CD8-positive, alpha-beta T cell (primary cell): ENCODE measurements at regions of chr6 and their contacts with region 1.

Region 1: DNA sequence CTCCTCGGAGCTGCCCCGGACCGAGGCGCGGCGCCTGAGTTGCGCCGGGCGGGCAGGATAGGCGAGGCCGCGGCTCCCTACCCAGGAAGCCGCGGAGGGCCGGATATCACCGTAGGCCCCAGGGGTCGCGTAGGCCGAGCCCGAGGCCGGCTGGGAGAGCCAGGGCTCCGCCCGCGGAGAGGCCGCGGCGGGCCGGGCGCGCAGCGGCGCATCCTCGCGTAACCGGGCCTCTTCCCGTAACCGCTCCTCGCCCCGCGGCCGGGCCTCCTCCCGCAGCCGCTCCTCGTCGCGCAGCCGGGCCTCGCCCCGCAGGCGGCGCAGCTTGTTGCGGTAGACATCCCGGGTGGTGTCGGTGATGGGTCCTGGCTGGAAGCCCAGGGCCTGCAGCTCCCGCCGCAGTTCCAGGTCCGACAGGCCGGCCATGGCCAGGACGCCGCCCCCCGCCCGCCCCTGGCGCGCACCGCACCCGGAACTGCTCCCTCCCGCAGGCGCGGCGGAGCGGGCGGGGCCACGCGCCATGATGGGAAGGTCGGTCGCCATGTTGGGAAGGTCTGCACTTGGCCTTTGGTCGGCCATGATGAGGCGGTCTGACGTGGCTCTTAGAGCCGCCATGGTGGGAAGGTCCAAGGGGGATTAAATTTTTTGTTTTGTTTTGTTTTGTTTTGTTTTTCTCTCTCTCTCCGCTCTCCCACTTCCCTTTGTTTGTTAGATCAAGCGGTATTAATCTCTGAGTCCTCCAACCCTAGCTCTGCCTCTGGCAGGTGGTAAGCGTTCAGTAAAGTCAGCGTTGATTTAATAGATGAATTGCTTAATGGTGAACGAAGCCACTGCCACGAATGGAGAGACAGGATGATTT is at the start of gene LEMD2:
- DNase-seq: peak; percentile 88 to 95 (median 93)
- ATAC-seq: peak; percentile 91
- H3K4me3 ChIP-seq: peak within 1 kb of the TSS; percentile 55 to 90
- H3K4me3 Mint-ChIP-seq: peak within 1 kb of the TSS; percentile 97
- H3K27ac ChIP-seq: peak within 1 kb of the TSS; percentile 87 to 90
- H3K27ac Mint-ChIP-seq: peak within 1 kb of the TSS; percentile 99
- H3K4me1 ChIP-seq: peaks cover 41% of the 10 kb centered on the region
- H3K4me1 Mint-ChIP-seq: peaks cover 51% of the 10 kb centered on the region
- H3K27me3 ChIP-seq: no peaks in the 10 kb centered on the region
- H3K27me3 Mint-ChIP-seq: peaks cover 5% of the 10 kb centered on the region
- CTCF ChIP-seq: no peak
- total RNA-seq, gene LEMD2: 124 TPM

Region 2: DNA sequence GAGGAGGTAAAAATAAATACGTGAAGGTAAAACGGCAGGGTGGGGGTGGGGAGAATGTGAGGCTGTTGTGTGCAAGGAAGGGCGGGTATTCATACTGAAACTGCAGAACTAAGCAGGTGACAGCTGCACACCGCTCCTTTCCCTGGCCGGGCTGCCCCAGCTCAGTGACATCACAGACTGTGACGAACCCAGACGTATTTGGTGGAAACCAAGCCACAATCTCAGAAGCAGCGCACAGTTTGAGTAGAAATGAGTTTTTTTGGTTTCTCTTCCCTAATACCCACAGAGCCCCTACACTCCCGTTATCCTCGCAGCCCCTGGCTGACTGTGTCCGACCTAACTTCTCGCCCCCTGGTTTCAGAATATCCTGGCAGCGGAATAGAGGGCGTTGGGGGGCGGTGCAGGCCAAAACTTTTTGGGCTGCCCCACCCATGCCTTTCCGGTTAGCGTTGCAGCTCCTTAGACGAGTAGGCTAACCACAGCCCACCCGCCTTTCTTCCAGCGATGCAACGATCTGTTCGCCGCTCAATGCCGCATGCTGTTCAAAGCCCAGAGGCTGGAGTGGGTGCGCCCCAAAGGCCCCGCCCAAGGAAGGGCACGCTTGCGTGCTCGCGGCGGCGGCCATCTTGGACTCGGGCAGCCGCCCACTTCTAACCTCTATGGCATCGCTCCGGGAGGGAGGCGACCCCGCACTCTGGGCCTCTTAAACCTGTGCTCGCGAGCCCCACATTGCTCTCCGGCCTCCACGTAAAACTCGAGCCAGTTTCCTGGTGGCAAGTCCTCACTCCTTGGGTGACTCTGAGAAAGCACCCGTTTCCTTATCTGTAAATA is 217.9 kb before region 1 on chr6:
- CTCF ChIA-PET with region 1: no interaction called
- POLR2A ChIA-PET with region 1: no interaction called
- intact Hi-C with region 1: loop called in 1 of 2 experiments (anchors 2 kb)
- DNase-seq: peak; percentile 86 to 98 (median 92)
- ATAC-seq: peak; percentile 86
- H3K4me3 ChIP-seq: peak overlapping the region; percentile 57 to 67
- H3K4me3 Mint-ChIP-seq: peak overlapping the region; percentile 92
- H3K27ac ChIP-seq: peak overlapping the region; percentile 93 to 99
- H3K27ac Mint-ChIP-seq: peak overlapping the region; percentile 100
- H3K4me1 ChIP-seq: peaks cover 20% of the 10 kb centered on the region
- H3K4me1 Mint-ChIP-seq: peaks cover 29% of the 10 kb centered on the region
- H3K27me3 ChIP-seq: no peaks in the 10 kb centered on the region
- H3K27me3 Mint-ChIP-seq: no peaks in the 10 kb centered on the region
- CTCF ChIP-seq: no peak

Region 3: GRCh38 chr6:33771146-33772081 is 17.5 kb before region 1 on chr6:
- CTCF ChIA-PET with region 1: interaction called, 14 read pairs
- POLR2A ChIA-PET with region 1: interaction called, 5 read pairs
- intact Hi-C with region 1: no loop called
- DNase-seq: peak; percentile 27 to 81 (median 65)
- ATAC-seq: peak; percentile 82
- H3K4me3 ChIP-seq: no peak overlapping the region
- H3K4me3 Mint-ChIP-seq: no peak overlapping the region
- H3K27ac ChIP-seq: no peak overlapping the region
- H3K27ac Mint-ChIP-seq: peak overlapping the region; percentile 58
- H3K4me1 ChIP-seq: no peaks in the 10 kb centered on the region
- H3K4me1 Mint-ChIP-seq: peaks cover 9% of the 10 kb centered on the region
- H3K27me3 ChIP-seq: no peaks in the 10 kb centered on the region
- H3K27me3 Mint-ChIP-seq: peaks cover 9% of the 10 kb centered on the region
- CTCF ChIP-seq: peak; percentile 95

Region 4: DNA sequence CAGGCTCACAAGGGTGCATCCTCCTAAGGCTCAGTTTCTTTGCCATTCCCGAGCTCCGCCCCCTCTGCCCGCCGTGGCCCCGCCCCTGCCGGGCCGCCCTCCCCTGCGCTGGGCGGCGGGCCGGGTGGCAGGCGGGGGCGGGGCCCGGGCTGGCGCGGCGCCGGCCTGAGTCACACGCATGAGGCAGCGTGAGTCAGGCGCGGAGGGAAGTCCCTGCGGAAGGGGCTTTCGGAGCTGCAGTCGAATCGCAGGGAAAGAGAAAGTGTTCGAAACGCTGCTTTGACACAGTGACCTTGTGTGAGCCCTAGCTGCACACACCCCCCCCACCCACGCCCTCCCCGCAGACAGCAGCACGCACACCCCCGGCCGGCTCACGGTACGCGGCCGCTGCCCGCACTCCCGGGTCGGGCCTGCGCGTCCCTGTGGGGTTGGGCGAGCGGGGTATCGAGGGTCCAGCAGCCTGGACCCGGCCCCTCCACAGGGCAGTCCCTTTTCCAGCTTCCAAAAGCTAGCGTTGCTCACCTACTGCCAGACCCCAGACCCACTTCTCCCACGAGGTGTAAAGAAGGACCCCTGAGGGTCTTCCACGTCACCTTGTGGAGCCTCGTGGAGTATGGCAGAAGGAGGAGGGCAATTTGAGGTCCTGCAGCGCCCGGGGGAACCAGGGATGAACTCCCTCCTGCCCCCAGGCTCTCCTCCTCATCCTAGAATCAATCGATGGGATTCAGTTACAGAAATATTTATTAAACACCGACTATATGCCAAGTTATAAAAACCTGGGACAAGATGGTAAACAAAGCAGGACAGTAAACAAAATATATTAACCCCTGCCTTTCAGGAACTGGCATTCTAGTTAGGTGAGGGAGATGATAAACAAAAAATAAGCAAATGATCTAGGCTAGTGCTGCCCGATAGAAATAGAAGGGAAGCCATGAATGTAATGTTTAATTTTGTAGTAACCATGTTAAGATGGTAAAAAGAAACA is 435.3 kb after region 1 on chr6:
- CTCF ChIA-PET with region 1: no interaction called
- POLR2A ChIA-PET with region 1: no interaction called
- intact Hi-C with region 1: loop called in 1 of 2 experiments (anchors 5 kb)
- DNase-seq: peak; percentile 88 to 99 (median 94)
- ATAC-seq: peak; percentile 98
- H3K4me3 ChIP-seq: peak overlapping the region; percentile 51 to 86
- H3K4me3 Mint-ChIP-seq: peak overlapping the region; percentile 70
- H3K27ac ChIP-seq: peak overlapping the region; percentile 76 to 87
- H3K27ac Mint-ChIP-seq: peak overlapping the region; percentile 89
- H3K4me1 ChIP-seq: peaks cover 14% of the 10 kb centered on the region
- H3K4me1 Mint-ChIP-seq: peaks cover 20% of the 10 kb centered on the region
- H3K27me3 ChIP-seq: no peaks in the 10 kb centered on the region
- H3K27me3 Mint-ChIP-seq: no peaks in the 10 kb centered on the region
- CTCF ChIP-seq: no peak

Region 5: GRCh38 chr6:34425498-34426410 is 636.8 kb after region 1 on chr6 and contains the start of gene RPS10:
- CTCF ChIA-PET with region 1: no interaction called
- POLR2A ChIA-PET with region 1: no interaction called
- intact Hi-C with region 1: loop called in 1 of 2 experiments (anchors 1 kb)
- DNase-seq: peak; percentile 79 to 95 (median 89)
- ATAC-seq: peak; percentile 98
- H3K4me3 ChIP-seq: peak within 1 kb of the TSS; percentile 78 to 96
- H3K4me3 Mint-ChIP-seq: peak within 1 kb of the TSS; percentile 96
- H3K27ac ChIP-seq: peak within 1 kb of the TSS; percentile 90 to 95
- H3K27ac Mint-ChIP-seq: peak within 1 kb of the TSS; percentile 97
- H3K4me1 ChIP-seq: peaks cover 23% of the 10 kb centered on the region
- H3K4me1 Mint-ChIP-seq: peaks cover 36% of the 10 kb centered on the region
- H3K27me3 ChIP-seq: no peaks in the 10 kb centered on the region
- H3K27me3 Mint-ChIP-seq: no peaks in the 10 kb centered on the region
- CTCF ChIP-seq: no peak
- total RNA-seq, gene RPS10: 2,721 to 2,770 TPM

Region 6: DNA sequence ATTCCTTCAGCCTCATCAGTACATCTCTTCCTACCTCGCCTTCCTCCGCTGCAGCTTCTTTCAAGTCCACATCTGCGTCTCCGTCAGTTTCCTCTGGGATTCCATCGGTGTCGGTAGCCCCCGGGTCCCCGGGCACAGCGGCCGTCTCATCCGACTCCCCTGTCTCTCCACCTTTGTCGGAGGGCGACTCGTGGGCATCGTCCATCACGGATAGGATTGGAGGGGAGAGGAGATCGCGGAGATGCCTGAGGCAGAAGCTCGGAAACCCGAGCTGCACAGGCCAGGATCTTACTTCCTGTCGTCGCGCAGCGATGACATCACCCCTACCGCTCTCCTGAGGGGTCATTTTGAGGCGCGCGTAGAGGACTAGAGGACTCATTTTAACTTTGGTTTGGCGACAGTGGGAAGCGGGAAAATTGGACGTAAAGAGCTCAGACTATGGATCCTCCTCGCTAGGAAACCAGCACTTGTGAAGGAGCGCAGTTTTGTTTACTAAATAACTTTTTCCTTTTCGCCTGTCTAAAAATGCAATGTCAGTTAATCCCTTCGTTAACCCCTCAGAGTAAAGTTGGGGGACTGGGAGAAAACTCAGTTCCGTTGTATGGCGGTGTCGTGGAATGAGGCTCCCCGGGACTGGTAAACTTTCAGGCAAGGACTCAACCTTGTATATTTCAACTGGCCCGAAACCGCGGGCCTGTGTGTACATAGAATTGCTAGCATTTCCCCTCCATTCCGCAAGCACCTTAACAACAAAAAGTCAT is 1099.0 kb after region 1 on chr6 and contains the start of gene TAF11:
- CTCF ChIA-PET with region 1: no interaction called
- POLR2A ChIA-PET with region 1: no interaction called
- intact Hi-C with region 1: loop called in 1 of 2 experiments (anchors 5 kb)
- DNase-seq: peak; percentile 74 to 96 (median 92)
- ATAC-seq: peak; percentile 67
- H3K4me3 ChIP-seq: peak within 1 kb of the TSS; percentile 84 to 93
- H3K4me3 Mint-ChIP-seq: peak within 1 kb of the TSS; percentile 100
- H3K27ac ChIP-seq: peak within 1 kb of the TSS; percentile 90 to 93
- H3K27ac Mint-ChIP-seq: peak within 1 kb of the TSS; percentile 99
- H3K4me1 ChIP-seq: peaks cover 21% of the 10 kb centered on the region
- H3K4me1 Mint-ChIP-seq: peaks cover 66% of the 10 kb centered on the region
- H3K27me3 ChIP-seq: no peaks in the 10 kb centered on the region
- H3K27me3 Mint-ChIP-seq: no peaks in the 10 kb centered on the region
- CTCF ChIP-seq: no peak
- total RNA-seq, gene TAF11: 40.0 to 40.6 TPM